Heart left ventricle (tissue), 16 donors: ENCODE measurements at regions of chr11 and their contacts with region 1.

Region 1: DNA sequence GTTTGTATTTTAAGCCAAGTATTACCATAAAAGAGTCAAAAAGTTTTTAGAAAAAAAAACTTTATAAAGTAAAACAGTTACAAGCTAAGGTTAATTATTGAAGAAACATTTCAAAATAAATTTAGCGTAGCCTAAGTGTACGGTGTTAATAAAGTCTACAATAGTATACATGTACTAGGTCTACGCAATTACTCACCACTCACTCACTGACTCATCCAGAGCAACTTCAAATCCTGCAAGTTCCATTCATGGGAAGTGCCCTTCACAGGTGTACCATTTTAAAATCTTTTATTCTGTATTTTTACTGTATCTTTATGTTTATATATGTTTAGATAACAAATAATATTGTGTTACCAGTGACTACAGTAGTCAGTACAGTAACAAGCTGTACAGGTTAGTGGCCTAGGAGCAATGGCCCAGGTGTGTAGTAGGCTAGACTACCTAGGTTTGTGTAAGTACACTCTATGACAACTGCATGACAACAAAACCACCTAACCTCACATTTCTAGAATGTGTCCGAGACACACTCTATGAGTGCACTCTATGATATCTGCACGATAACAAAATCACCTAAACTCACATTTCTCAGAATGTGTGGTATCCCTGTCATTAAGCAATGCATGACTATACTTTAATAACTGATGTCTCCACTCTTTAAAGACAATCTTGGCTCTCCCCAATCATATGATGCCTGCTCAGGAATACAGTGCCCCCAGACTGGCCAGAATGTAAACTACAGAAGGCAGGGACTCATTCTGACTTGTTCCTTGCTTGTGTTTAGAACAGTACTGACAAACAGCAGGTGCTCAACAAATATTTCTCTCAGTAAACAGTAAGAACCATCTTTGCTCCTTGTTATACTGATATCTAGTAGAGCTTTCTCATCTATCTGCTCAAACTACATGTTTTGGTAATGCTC is 21.2 kb downstream of the KMT5B start:
- DNase-seq: no peak
- ATAC-seq: no peak
- H3K4me3 ChIP-seq: no peak overlapping the region
- H3K27ac ChIP-seq: no peak overlapping the region
- H3K4me1 ChIP-seq: peaks cover 0 to 63% (median 36%) of the 10 kb centered on the region in 12 donors
- H3K27me3 ChIP-seq: no peaks in the 10 kb centered on the region
- CTCF ChIP-seq: no peak
- POLR2A ChIP-seq: no peak

Region 2: DNA sequence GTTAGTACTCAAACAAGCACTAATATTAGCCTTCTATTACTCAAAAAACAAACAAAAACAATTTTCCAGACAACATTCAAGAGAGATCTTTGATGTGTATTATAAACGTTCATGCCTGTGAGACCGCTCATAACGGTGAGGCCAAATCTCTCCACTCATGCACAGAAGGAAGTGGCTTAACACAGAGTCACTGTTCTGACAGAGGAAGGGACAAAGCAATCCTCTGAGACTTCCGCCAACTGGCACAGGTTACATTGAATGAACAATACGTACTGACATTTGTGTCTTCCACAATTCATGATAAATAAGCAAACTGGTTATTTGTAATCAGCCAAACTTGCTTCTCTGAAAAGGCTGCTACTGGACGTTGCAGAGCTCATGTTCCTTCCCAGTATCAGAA is 101.2 kb before region 1 on chr11:
- intact Hi-C with region 1: no loop called
- DNase-seq: peak in 1 of 5 donors; percentile 33
- ATAC-seq: peak; percentile 68 to 87 (median 80)
- H3K4me3 ChIP-seq: no peak overlapping the region
- H3K27ac ChIP-seq: peak overlapping the region in 1 of 12 donors; percentile 38
- H3K4me1 ChIP-seq: peaks cover 0 to 17% (median 7%) of the 10 kb centered on the region in 12 donors
- H3K27me3 ChIP-seq: no peaks in the 10 kb centered on the region
- CTCF ChIP-seq: no peak
- POLR2A ChIP-seq: no peak

Region 3: DNA sequence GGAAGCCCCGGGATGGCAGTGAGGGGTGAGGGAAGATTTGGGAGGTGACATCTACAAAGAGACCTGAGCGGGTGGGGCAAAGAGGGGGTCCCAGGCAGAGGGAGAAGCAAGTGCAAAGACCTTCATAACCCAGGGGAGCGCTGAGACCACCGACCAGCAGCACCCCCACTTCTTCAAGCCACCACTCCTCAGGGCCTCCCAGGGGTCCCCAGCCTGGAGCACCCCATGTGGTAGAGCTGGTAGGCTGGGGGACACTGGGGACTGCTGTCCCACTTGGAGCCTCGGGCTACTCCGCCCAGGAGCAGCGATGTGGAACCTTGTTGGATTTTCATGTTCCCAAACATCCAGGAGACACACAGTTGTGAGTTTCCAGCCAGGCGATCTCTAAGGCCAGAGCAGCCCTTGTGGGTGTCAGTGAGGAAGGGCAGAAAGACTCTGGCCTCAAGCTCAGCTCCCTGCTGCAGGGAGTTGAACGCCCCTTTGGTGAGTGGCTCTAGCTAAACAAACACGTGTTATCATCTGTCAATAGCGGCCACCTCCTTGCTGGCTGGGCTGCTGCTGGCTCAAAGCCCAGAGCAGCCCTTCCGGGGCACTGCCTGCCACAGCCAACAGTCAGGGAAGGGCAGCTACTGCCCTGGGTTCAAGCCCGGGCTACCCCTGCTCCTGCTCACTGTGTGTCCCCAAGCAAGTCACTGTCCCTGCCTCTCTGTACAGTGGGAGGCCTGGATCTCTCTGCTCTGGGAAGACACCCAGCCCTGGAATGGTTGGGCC is 45.0 kb before region 1 on chr11:
- intact Hi-C with region 1: loop called in 1 of 10 experiments (anchors 5 kb)
- DNase-seq: peak in 4 of 5 donors; percentile 29 to 69 (median 50)
- ATAC-seq: peak; percentile 43 to 76 (median 68)
- H3K4me3 ChIP-seq: no peak overlapping the region
- H3K27ac ChIP-seq: peak overlapping the region; percentile 67 to 82 (median 78)
- H3K4me1 ChIP-seq: peaks cover 0 to 34% (median 19%) of the 10 kb centered on the region in 12 donors
- H3K27me3 ChIP-seq: no peaks in the 10 kb centered on the region
- CTCF ChIP-seq: no peak
- POLR2A ChIP-seq: no peak